ENCODE measurements at regions of chr10 and their contacts with region 1.

Region 1: GRCh38 chr10:24952707-24953645 is 570 bp upstream of the PRTFDC1 start:
- DNase-seq: peak in 1 of 2 donors; percentile 73
- H3K4me3 ChIP-seq: peak overlapping the region; percentile 70 to 82
- H3K27ac ChIP-seq: peak overlapping the region; percentile 38 to 66
- H3K4me1 ChIP-seq: peaks cover 3 to 11% of the 10 kb centered on the region in 2 donors
- H3K27me3 ChIP-seq: no peaks in the 10 kb centered on the region
- CTCF ChIP-seq: peak in 1 of 3 experiments; percentile 3

Region 2: DNA sequence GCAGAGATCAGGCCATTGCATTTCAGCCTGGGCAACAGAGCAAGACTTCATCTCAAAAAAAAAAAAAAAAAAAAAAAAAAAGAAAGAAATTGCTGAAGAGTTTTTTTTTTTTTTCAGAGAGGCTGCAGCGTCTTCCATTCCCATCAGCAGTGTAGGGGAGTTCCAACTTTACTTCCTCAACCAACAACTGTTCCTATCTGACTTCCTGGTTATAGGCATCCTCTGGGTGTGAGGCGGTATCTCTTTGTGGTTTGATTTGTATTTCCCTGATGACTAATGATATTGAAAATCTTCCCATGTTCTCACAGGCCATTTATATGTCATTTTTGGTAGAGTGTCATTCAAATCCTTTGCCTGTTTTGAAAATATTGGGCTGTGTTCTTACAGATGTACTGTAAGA is 40.8 kb before region 1 on chr10:
- intact Hi-C with region 1: loop called (anchors 5 kb)
- DNase-seq: no peak
- H3K4me3 ChIP-seq: no peak overlapping the region
- H3K27ac ChIP-seq: no peak overlapping the region
- H3K4me1 ChIP-seq: peaks cover 0 to 20% of the 10 kb centered on the region in 2 donors
- H3K27me3 ChIP-seq: no peaks in the 10 kb centered on the region
- CTCF ChIP-seq: no peak

Region 3: DNA sequence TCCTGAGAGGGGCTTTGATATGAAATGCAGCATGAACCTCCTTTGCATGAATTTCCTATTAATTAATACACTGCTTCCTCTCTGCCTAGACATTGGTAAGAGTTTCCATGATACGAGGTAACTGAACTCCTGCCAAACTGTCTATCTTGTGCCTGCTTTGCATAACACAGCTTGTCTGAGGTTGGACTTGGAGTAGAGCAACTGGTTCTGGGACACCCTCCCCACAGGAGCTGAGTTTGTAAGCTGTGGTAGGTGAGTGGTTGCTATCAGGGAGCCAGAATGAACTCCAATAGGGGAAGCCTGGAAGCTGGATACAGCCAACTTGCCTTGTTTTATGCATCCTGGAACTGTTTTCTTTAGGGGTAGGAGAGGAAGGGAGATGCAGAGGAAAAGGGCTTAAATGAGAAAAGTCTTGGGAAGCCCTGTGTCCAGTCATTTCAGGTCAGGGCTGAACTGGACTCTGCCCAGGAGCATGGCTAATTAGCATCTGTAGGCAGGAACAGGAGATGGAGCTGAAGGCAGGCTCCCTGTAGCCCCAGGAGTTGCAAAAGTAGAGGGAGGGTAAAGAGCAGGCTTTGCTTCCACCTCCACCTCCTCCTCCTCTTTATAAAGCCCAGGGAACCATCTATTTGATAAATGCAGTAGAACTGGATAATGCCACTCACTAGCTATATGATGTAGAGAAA is 148.6 kb after region 1 on chr10:
- intact Hi-C with region 1: no loop called
- DNase-seq: no peak
- H3K4me3 ChIP-seq: no peak overlapping the region
- H3K27ac ChIP-seq: no peak overlapping the region
- H3K4me1 ChIP-seq: no peaks in the 10 kb centered on the region
- H3K27me3 ChIP-seq: no peaks in the 10 kb centered on the region
- CTCF ChIP-seq: no peak